ENCODE measurements at regions of chr19 and their contacts with region 1.

Region 1: GRCh38 chr19:51751655-51752054 is at the start of gene FPR1:
- DNase-seq: no peak
- ATAC-seq: peak; percentile 94
- H3K4me3 ChIP-seq: peak within 1 kb of the TSS in 1 of 5 experiments; percentile 85
- H3K4me3 Mint-ChIP-seq: peak within 1 kb of the TSS; percentile 41
- H3K27ac ChIP-seq: no peak within 1 kb of the TSS
- H3K27ac Mint-ChIP-seq: peak within 1 kb of the TSS; percentile 77
- H3K4me1 ChIP-seq: peaks cover 0 to 5% of the 10 kb centered on the region in 2 donors
- H3K4me1 Mint-ChIP-seq: peaks cover 14% of the 10 kb centered on the region
- H3K27me3 ChIP-seq: peaks cover 0 to under 1% (median 0%) of the 10 kb centered on the region in 4 experiments
- H3K27me3 Mint-ChIP-seq: peaks cover 9% of the 10 kb centered on the region
- CTCF ChIP-seq: no peak
- total RNA-seq, gene FPR1: 0.17 TPM in 1 of 2 replicates, not detected in the other

Region 2: GRCh38 chr19:51703575-51704515 is 47.8 kb before region 1 on chr19:
- CTCF ChIA-PET with region 1: no interaction called
- POLR2A ChIA-PET with region 1: no interaction called
- intact Hi-C with region 1: loop called (anchors 1 kb)
- DNase-seq: peak; percentile 98
- ATAC-seq: peak; percentile 92
- H3K4me3 ChIP-seq: peak overlapping the region; percentile 51 to 74 (median 68)
- H3K4me3 Mint-ChIP-seq: peak overlapping the region; percentile 91
- H3K27ac ChIP-seq: peak overlapping the region; percentile 64 to 84
- H3K27ac Mint-ChIP-seq: peak overlapping the region; percentile 90
- H3K4me1 ChIP-seq: peaks cover 22 to 31% of the 10 kb centered on the region in 2 donors
- H3K4me1 Mint-ChIP-seq: peaks cover 36% of the 10 kb centered on the region
- H3K27me3 ChIP-seq: peaks cover 0 to 30% (median 8%) of the 10 kb centered on the region in 4 experiments
- H3K27me3 Mint-ChIP-seq: peaks cover 23% of the 10 kb centered on the region
- CTCF ChIP-seq: peak; percentile 60

Measured in B cell (primary cell).